ENCODE measurements at regions of chr2 and their contacts with region 1.

Region 1: DNA sequence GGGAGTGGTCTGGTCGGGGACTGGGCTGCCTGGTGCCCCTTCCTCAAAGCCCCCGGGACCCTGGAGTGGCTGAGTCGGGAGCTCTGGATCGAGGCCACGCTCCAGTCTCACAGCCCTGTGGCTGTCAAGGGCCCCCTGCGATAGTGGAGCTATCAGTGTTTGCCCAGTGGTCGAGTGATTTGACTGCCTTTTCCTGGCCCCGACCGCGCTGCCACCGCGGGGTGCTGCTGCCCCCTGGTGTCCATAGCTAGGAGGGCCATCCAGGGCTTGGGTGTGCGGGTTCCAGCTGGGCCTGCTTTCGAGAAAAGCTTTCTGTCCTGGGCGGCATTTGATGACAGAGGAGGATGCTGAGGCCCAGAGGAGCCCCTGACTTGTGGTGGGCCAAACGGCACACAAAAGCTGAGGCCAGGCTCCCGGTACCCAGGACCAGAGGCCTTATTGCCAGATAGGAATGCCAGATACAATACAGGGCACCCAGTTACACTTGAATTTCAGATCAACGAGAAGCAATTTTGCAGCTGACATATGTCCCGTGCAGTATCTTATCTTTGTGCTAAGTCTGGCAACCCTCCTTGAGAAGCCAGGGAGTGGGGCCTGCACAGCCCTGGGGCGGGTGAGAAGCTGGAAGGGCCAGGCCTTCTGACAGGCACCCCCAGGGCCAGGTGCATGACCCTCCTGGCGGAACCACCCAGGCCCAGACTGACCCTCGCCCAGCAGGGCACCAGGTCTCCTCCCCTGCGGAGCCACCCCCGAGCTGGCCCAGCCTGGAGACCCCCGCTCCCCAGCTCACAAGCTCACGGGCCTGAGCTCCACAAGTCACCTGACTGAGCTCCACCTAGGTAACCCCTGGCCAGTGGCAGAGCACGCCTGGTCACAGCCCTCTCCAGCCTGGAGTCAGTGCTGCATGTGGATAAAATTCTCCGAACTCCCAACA is 13.0 kb downstream of the ODC1 start:
- DNase-seq: no peak
- H3K4me3 ChIP-seq: no peak overlapping the region
- CTCF ChIP-seq: peak; percentile 99

Region 2: GRCh38 chr2:9178904-9179571 is 1256.1 kb before region 1 on chr2:
- CTCF ChIA-PET with region 1: no interaction called
- POLR2A ChIA-PET with region 1: no interaction called
- DNase-seq: no peak
- H3K4me3 ChIP-seq: no peak overlapping the region
- CTCF ChIP-seq: no peak

Region 3: DNA sequence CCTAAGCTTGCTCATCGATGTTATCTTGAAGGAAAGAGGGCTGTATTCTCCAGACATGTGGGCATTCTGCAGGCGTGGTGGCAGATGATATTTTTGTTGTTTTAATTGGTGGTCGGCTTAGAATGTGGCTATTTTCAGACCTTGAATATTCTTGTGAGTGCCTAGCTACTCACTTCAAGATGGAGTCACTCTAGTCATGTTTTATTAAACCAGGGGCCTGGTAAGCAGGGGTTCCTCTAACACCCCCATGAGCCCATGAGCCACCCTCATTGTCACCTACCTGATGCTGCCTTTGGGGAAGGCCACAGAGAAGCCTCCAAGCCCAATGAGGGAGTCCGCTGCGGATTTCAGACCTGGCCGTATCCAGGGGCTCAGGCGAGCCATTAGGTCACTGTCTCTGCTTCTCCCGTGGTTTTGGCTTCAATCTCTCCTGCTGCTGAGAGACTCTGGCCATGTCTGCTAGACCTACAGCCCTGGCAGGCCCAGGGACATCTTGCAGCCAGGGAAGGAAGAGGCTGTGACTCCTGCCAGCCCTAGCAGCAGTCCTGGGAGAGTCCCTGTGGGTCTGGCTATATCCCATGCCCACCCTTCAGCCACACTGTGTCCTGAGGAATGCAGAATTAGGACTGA is 408.1 kb before region 1 on chr2:
- CTCF ChIA-PET with region 1: no interaction called
- POLR2A ChIA-PET with region 1: no interaction called
- DNase-seq: no peak
- H3K4me3 ChIP-seq: no peak overlapping the region
- CTCF ChIP-seq: no peak

Region 4: GRCh38 chr2:10057231-10058107 is 377.7 kb before region 1 on chr2:
- CTCF ChIA-PET with region 1: interaction called, 482 read pairs
- POLR2A ChIA-PET with region 1: no interaction called
- DNase-seq: no peak
- H3K4me3 ChIP-seq: peak overlapping the region; percentile 34
- CTCF ChIP-seq: no peak

Region 5: DNA sequence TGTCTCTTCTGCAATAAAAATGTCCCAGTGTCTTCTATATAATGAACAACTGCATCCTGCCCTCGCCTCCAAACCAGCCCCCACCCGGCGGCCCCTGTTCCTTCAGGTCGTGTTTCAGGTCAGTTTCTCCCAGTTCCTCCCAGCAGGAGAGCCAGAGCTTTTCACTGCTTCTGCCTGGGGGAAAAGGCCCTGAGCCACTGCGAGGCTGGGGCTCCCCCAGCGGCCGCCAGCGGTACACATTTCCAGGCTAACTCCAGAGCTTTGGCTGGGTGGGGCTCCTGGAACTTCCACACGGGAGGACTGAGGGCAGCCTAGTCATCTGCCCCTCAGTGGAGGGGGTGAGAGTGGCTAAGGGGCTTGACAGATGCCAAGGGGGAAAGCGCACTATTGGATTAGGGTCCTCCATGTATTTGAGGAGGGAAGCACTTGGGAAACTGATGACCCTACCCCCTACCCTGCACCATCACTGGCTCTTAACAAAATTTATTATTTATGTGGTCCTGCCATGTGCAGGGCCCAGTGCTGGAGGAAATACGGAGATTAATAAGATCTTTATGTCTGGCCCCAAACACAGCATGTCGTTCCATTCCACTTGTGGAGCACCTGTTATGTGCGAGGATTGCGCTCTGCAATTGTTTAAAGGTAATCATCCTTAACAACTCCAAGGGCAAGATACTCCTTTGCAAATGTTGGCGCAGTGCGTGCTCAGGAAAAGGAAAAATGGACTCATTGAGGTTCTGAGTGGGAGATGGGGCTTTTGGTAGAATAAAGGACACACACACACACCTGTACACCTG is 337.6 kb before region 1 on chr2:
- CTCF ChIA-PET with region 1: interaction called, 31 read pairs
- POLR2A ChIA-PET with region 1: no interaction called
- DNase-seq: no peak
- H3K4me3 ChIP-seq: no peak overlapping the region
- CTCF ChIP-seq: peak; percentile 97

Region 6: GRCh38 chr2:10269711-10270610 is 165.2 kb before region 1 on chr2:
- CTCF ChIA-PET with region 1: interaction called, 10 read pairs
- POLR2A ChIA-PET with region 1: no interaction called
- DNase-seq: no peak
- H3K4me3 ChIP-seq: no peak overlapping the region
- CTCF ChIP-seq: no peak

Region 7: GRCh38 chr2:10448208-10448645 is 13.1 kb after region 1 on chr2 and contains the start of gene ODC1:
- CTCF ChIA-PET with region 1: interaction called, 96 read pairs
- POLR2A ChIA-PET with region 1: interaction called, 6 read pairs
- DNase-seq: peak; percentile 31
- H3K4me3 ChIP-seq: peak within 1 kb of the TSS; percentile 72
- CTCF ChIP-seq: no peak

Region 8: DNA sequence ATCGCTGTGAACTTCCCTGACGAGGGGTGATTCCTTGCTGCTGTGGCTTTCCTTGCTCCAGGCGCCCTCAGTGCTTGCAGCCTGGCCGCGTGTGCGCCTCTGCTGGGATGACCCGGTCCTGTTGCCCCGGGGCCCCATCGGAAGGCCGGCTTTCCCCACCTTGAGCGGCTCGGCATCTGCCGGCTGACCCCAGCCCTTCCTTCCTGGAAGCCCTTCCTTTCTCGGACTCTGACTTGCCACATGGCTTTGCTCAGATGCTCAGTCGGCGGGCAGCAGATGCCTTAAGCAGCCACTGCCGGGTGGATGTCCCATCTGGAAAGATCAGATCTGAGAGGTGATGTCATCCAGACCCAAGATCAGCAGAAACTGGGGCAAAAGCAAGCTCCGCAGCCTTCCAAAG is 113.5 kb after region 1 on chr2:
- CTCF ChIA-PET with region 1: no interaction called
- POLR2A ChIA-PET with region 1: no interaction called
- DNase-seq: no peak
- H3K4me3 ChIP-seq: no peak overlapping the region; the same call in 1 of the 2 replicates
- CTCF ChIP-seq: no peak

Measured in AG04449 (cell line).